Psoas muscle (tissue), 8 donors: ENCODE measurements at regions of chr19 and their contacts with region 1.

Region 1: DNA sequence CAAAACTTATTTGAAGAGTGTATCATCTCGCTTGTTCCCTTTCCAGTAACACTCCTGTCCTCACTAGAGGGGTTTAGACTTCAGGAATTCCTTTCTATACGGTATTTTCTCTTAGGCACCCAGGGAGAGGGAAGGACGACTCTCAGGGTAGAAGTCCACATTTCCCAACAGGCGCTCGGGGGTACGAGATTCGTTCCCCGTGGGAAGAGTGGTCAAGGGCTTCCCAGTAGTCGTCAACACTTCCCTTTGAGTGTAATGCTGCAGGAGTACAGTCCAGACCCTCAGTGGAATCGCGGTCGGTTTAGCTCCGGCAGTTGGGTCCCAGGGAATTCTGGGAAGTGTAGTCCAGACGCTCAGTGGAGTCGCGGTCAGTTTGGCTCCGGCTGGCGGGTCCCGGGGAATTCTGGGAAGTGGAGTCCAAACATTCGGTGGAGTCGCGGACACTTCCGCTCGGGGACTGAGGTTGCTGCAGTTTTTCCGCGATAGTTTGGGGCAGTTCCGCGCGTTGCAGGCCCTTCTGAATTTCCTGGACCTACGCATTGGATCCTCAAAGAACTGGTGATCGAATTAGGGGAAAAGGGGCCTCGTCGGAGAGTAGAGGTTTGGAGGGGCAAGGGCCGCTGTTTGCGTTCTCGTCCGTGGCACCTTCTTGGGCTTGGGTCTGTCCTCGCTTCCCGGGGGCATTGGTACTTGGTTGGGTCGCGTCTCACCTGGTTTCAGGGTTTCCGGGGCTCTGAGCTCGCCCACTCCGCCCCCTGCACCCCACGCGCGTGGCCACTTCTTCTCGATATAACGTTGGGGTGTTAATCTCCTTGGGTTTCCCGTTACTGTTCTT is at the start of gene ZNF224:
- DNase-seq: peak; percentile 90 to 93
- ATAC-seq: peak; percentile 97 to 100 (median 100)
- H3K4me3 ChIP-seq: peak within 1 kb of the TSS; percentile 83
- H3K27ac ChIP-seq: peak within 1 kb of the TSS; percentile 70
- H3K4me1 ChIP-seq: no peaks in the 10 kb centered on the region
- H3K27me3 ChIP-seq: no peaks in the 10 kb centered on the region
- CTCF ChIP-seq: no peak
- total RNA-seq, gene ZNF224: 3.6 to 10.2 (median 6.4) TPM

Region 2: GRCh38 chr19:43983912-43984686 is 110.0 kb before region 1 on chr19 and contains the start of gene ZNF155:
- intact Hi-C with region 1: loop called in 1 of 2 experiments (anchors 10 kb)
- DNase-seq: peak; percentile 89 to 93
- ATAC-seq: peak; percentile 100
- H3K4me3 ChIP-seq: peak within 1 kb of the TSS; percentile 81
- H3K27ac ChIP-seq: peak within 1 kb of the TSS; percentile 62
- H3K4me1 ChIP-seq: peaks cover 4% of the 10 kb centered on the region
- H3K27me3 ChIP-seq: no peaks in the 10 kb centered on the region
- CTCF ChIP-seq: no peak
- total RNA-seq, gene ZNF155: 1.5 to 4.0 (median 2.5) TPM

Region 3: GRCh38 chr19:44002566-44003460 is 91.3 kb before region 1 on chr19 and contains the start of gene ZNF230:
- intact Hi-C with region 1: loop called in 1 of 2 experiments (anchors 10 kb)
- DNase-seq: peak; percentile 88 to 93
- ATAC-seq: peak; percentile 100
- H3K4me3 ChIP-seq: peak within 1 kb of the TSS; percentile 79
- H3K27ac ChIP-seq: peak within 1 kb of the TSS; percentile 79
- H3K4me1 ChIP-seq: peaks cover 12% of the 10 kb centered on the region
- H3K27me3 ChIP-seq: no peaks in the 10 kb centered on the region
- CTCF ChIP-seq: no peak
- total RNA-seq, gene ZNF230: 0.25 to 1.8 (median 1.2) TPM

Region 4: GRCh38 chr19:44071824-44072542 is 22.2 kb before region 1 on chr19 and contains the start of gene ZNF284:
- intact Hi-C with region 1: loop called in 1 of 2 experiments (anchors 2 kb)
- DNase-seq: peak; percentile 85 to 91
- ATAC-seq: peak; percentile 99 to 100 (median 100)
- H3K4me3 ChIP-seq: peak within 1 kb of the TSS; percentile 85
- H3K27ac ChIP-seq: peak within 1 kb of the TSS; percentile 63
- H3K4me1 ChIP-seq: peaks cover 10% of the 10 kb centered on the region
- H3K27me3 ChIP-seq: no peaks in the 10 kb centered on the region
- CTCF ChIP-seq: no peak
- total RNA-seq, gene ZNF284: 0.66 to 1.1 (median 0.91) TPM

Region 5: GRCh38 chr19:44113138-44113783 is 19.1 kb after region 1 on chr19 and contains the start of gene ZNF225:
- intact Hi-C with region 1: loop called (anchors 2 kb)
- DNase-seq: peak; percentile 93 to 95
- ATAC-seq: peak; percentile 99 to 100 (median 100)
- H3K4me3 ChIP-seq: peak within 1 kb of the TSS; percentile 93
- H3K27ac ChIP-seq: peak within 1 kb of the TSS; percentile 88
- H3K4me1 ChIP-seq: peaks cover 15% of the 10 kb centered on the region
- H3K27me3 ChIP-seq: no peaks in the 10 kb centered on the region
- CTCF ChIP-seq: peak; percentile 10
- total RNA-seq, gene ZNF225: 0.61 to 2.9 (median 1.4) TPM